Common myeloid progenitor, CD34-positive (primary cell): ENCODE measurements at regions of chr12 and their contacts with region 1.

Region 1: GRCh38 chr12:96516472-96517430 is 27.4 kb downstream of the CFAP54 start:
- DNase-seq: peak; percentile 86 to 93 (median 90)
- H3K4me3 ChIP-seq: peak overlapping the region in 1 of 7 experiments; percentile 11
- H3K27ac ChIP-seq: no peak overlapping the region
- H3K4me1 ChIP-seq: peaks cover 0 to 3% (median 1%) of the 10 kb centered on the region in 4 experiments
- H3K27me3 ChIP-seq: no peaks in the 10 kb centered on the region

Region 2: GRCh38 chr12:96132819-96133218 is 383.9 kb before region 1 on chr12:
- CTCF ChIA-PET with region 1: interaction called, 11 read pairs
- POLR2A ChIA-PET with region 1: no interaction called
- DNase-seq: peak; percentile 72 to 86 (median 85)
- H3K4me3 ChIP-seq: no peak overlapping the region
- H3K27ac ChIP-seq: no peak overlapping the region
- H3K4me1 ChIP-seq: peaks cover 4 to 21% (median 10%) of the 10 kb centered on the region in 4 experiments
- H3K27me3 ChIP-seq: no peaks in the 10 kb centered on the region

Region 3: GRCh38 chr12:96219698-96220206 is 297.0 kb before region 1 on chr12:
- CTCF ChIA-PET with region 1: interaction called, 16 read pairs
- POLR2A ChIA-PET with region 1: no interaction called
- DNase-seq: no peak
- H3K4me3 ChIP-seq: no peak overlapping the region
- H3K27ac ChIP-seq: peak overlapping the region in 1 of 2 experiments; percentile 3
- H3K4me1 ChIP-seq: peaks cover 19 to 43% (median 33%) of the 10 kb centered on the region in 4 experiments
- H3K27me3 ChIP-seq: no peaks in the 10 kb centered on the region

Region 4: GRCh38 chr12:96237465-96238077 is 279.2 kb before region 1 on chr12:
- CTCF ChIA-PET with region 1: interaction called, 13 read pairs
- POLR2A ChIA-PET with region 1: no interaction called
- DNase-seq: peak; percentile 84 to 97 (median 95)
- H3K4me3 ChIP-seq: peak overlapping the region in 4 of 7 experiments; percentile 8 to 50 (median 36)
- H3K27ac ChIP-seq: peak overlapping the region; percentile 60 to 74
- H3K4me1 ChIP-seq: peaks cover 2 to 77% (median 53%) of the 10 kb centered on the region in 4 experiments
- H3K27me3 ChIP-seq: no peaks in the 10 kb centered on the region

Region 5: GRCh38 chr12:96489103-96490056 is 27.4 kb before region 1 on chr12 and contains the start of gene CFAP54:
- CTCF ChIA-PET with region 1: interaction called, 19 read pairs
- POLR2A ChIA-PET with region 1: no interaction called
- DNase-seq: peak; percentile 93 to 96 (median 96)
- H3K4me3 ChIP-seq: peak within 1 kb of the TSS; percentile 76 to 92 (median 84)
- H3K27ac ChIP-seq: peak within 1 kb of the TSS; percentile 38 to 77
- H3K4me1 ChIP-seq: peaks cover 2 to 14% (median 9%) of the 10 kb centered on the region in 4 experiments
- H3K27me3 ChIP-seq: peaks cover 0 to 4% (median 0%) of the 10 kb centered on the region in 5 experiments

Region 6: DNA sequence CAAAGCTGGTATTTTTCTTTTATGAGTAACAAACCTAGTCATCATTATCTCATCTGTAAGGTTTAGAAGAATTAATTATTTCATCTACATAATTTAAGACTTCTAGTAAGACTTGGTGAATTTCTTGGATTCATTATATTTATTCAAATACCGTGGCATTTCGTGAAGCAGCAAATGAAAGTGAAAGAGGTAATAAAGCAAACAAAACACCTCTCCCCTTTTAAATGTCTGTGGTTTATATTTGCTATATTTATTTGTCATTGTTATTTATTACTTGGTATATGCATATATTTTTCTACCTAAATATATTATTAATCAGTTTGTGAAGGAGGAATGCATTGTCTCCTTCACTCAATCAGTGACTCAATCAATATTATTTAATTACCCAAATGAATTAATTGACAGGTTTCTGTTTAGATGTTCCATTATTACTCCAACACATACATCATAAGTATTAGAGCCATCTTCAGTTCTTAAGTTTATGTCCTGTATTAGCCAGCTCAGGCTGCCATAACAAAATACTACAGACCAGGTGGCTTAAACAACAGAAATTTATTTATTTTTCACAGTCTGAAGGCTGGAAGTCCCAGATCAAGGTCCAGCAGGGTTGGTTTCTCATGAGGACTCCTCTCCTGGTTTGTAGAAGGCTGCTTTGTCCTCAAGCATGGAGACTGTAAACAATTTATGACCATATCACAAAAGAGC is 20.8 kb before region 1 on chr12:
- CTCF ChIA-PET with region 1: interaction called, 15 read pairs
- POLR2A ChIA-PET with region 1: no interaction called
- DNase-seq: peak in 2 of 3 donors; percentile 51 to 66
- H3K4me3 ChIP-seq: peak overlapping the region in 1 of 7 experiments; percentile 33
- H3K27ac ChIP-seq: no peak overlapping the region
- H3K4me1 ChIP-seq: peaks cover 3 to 28% (median 10%) of the 10 kb centered on the region in 4 experiments
- H3K27me3 ChIP-seq: peaks cover 0 to 2% (median 0%) of the 10 kb centered on the region in 5 experiments

Region 7: DNA sequence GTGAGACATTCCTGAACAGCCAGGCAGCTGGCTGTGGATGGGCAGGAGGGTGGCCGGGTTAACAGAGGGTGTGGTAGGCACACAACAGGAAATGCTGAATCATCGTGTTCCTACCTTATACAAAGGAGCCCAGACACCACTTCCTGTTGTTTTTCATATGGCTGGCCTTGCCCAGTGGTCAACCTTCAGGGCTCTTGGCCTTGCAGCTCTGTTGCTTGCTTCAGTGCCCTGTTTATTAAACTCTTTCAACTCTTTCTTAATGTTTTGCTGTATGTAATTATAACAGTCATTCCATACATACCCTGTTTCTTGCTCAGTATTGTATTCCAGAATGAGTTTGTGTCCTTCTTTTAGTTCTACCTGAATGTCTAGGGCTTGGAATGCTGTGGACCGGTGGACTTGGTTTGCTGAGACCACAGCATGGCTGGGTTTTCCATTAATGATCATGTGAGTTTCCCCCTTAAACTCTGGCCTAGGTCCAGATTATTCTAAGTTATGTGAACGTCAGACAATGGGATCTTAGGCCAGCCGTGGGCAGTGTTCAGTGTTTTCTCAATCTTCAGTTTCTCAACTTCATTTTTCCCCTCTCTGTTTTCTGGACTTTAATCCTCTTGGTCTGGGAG is 15.5 kb before region 1 on chr12:
- CTCF ChIA-PET with region 1: interaction called, 15 read pairs
- POLR2A ChIA-PET with region 1: no interaction called
- DNase-seq: peak in 2 of 3 donors; percentile 39 to 65
- H3K4me3 ChIP-seq: peak overlapping the region in 2 of 7 experiments; percentile 31 to 39
- H3K27ac ChIP-seq: peak overlapping the region in 1 of 2 experiments; percentile 8
- H3K4me1 ChIP-seq: peaks cover 11 to 36% (median 24%) of the 10 kb centered on the region in 4 experiments
- H3K27me3 ChIP-seq: no peaks in the 10 kb centered on the region